ENCODE measurements at regions of chr7 and their contacts with region 1.

Region 1: GRCh38 chr7:73586911-73587310 is 8.5 kb upstream of the TBL2 start:
- DNase-seq: no peak
- H3K4me3 ChIP-seq: no peak overlapping the region
- H3K27ac ChIP-seq: no peak overlapping the region
- H3K4me1 ChIP-seq: no peaks in the 10 kb centered on the region
- H3K27me3 ChIP-seq: no peaks in the 10 kb centered on the region
- CTCF ChIP-seq: no peak

Region 2: DNA sequence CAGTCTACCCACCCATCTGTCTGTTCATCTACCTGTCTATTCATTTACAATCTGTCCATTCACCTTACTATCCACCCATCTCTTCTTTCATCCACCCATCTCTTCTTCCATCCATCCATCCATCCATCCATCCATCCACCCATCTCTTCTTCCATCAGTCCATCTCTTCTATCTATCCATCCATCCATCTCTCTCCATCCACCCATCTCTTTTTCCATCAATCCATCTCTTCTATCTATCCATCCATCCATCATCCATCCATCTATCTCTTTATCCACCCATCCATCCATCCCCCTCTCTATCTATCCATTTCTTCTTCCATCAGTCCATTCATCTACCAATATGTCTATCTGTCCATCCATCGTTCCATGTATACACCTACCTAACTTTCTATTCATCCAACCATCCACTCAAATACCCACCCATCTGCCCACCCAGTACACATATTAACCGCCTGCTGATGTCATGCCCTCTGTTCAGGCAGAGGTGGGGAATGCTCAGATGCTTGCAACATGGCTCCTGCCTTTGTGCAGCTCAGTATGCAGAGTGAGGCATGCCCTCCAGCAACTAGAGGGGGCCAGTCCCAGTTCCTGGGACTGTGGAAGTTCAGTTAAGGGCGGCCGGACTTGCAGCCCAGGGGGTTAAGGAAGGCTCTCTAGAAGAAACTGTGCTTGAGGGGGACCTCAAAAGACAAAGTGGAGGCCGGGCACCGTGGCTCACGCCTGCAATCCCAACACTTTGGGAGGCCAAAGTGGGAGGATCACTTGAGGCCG is 48.7 kb after region 1 on chr7:
- intact Hi-C with region 1: loop called (anchors 2 kb)
- DNase-seq: no peak
- H3K4me3 ChIP-seq: no peak overlapping the region
- H3K27ac ChIP-seq: no peak overlapping the region
- H3K4me1 ChIP-seq: peaks cover 0 to 8% (median 0%) of the 10 kb centered on the region in 4 donors
- H3K27me3 ChIP-seq: peaks cover 0 to 28% of the 10 kb centered on the region in 2 donors
- CTCF ChIP-seq: no peak

Region 3: GRCh38 chr7:73701357-73701995 is 114.6 kb after region 1 on chr7:
- intact Hi-C with region 1: no loop called
- DNase-seq: no peak
- H3K4me3 ChIP-seq: no peak overlapping the region
- H3K27ac ChIP-seq: no peak overlapping the region
- H3K4me1 ChIP-seq: peaks cover 0 to 24% (median 23%) of the 10 kb centered on the region in 4 donors
- H3K27me3 ChIP-seq: no peaks in the 10 kb centered on the region
- CTCF ChIP-seq: peak; percentile 33 to 37

Region 4: GRCh38 chr7:73811760-73812168 is 224.9 kb after region 1 on chr7:
- intact Hi-C with region 1: no loop called
- DNase-seq: peak; percentile 73 to 76
- H3K4me3 ChIP-seq: no peak overlapping the region
- H3K27ac ChIP-seq: no peak overlapping the region
- H3K4me1 ChIP-seq: no peaks in the 10 kb centered on the region
- H3K27me3 ChIP-seq: peaks cover 0 to 16% of the 10 kb centered on the region in 2 donors
- CTCF ChIP-seq: peak; percentile 80 to 85

Region 5: DNA sequence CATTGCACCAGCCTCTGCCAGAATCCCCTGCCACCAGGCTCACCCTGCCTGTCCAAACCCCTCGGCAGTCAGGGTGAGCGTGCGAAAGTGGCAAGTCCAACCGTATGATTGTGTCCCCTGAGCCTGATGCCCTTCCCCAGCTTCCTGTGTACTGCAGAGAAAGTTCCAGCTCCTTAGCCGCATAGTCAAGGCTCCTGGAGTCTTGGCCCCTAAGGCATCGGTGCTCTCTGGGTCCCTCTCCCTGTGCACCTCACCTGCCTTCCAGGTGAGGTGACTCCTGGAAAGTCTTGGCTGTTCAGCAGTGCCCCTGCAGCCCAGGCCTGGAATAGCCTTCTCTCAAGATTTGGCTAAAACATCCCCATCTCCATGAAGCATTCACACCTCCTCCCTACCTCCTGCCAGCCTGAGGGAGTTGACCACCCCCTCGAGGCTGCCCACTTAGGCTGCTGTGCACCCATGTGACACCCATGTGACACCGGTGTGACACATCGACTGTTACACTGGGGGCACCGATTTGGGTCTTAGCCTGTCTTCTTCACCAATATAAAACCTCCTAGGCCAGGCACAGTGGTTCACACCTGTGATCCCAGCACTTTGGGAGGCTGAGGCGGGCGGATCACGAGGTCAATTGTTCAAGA is 384.9 kb after region 1 on chr7:
- intact Hi-C with region 1: no loop called
- DNase-seq: peak in 1 of 2 donors; percentile 48
- H3K4me3 ChIP-seq: no peak overlapping the region
- H3K27ac ChIP-seq: no peak overlapping the region
- H3K4me1 ChIP-seq: peaks cover 0 to 64% (median 10%) of the 10 kb centered on the region in 4 donors
- H3K27me3 ChIP-seq: no peaks in the 10 kb centered on the region
- CTCF ChIP-seq: no peak

Measured in tibial artery (tissue), 4 donors.